Activated T-helper 1 cell treated with anti-CD3 and anti-CD28 coated beads, Interleukin-12 subunit alpha, Interleukin-12 subunit beta, Interleukin-2, Interleukin-4 antibody, amounts not matched to agents 30 ng/mL and 10 ng/mL and 1 ng/mL, durations not matched to agents 14 hours and 24 hours and 36 hours (primary cell): ENCODE measurements at regions of chr11 and their contacts with region 1.

Region 1: DNA sequence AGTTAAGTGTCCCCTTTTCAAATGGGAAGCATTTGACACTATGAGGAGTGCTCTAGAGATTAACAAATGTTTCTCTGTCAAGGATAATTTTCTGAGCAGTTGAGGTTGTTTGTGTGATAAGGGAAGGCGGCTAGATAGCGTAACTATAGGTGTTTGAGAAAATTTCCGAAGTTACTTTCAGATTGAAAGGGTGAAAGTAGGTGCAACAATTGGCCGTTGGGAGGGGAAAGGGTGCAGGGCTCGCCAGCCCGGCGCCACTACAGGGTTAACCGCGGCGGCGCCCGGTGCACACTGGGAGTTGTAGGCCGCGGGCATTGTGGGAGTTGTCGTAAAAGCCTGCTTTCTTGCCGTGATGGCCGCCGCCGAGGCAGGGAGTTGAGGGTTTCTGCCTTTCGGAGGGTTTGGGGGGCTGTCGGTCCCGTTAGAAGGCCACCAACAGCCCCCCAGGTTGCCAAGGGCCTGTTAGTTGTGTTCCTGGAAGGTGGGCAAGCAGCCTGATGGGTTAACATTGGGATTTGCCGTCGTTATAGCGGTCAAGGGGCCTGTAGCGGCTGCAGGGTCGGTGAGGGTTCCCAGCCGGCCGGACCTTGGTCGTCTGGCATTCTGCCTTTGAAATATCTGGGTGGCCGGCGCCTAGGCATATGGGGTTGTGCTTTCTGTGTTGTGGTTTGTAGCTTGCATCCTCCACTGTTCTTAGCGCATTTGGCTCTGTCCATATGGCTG is 36.5 kb upstream of the HSD17B12 start:
- DNase-seq: peak; percentile 83
- H3K4me3 Mint-ChIP-seq: peak overlapping the region; percentile 99
- H3K27ac Mint-ChIP-seq: peak overlapping the region; percentile 91
- H3K4me1 Mint-ChIP-seq: peaks cover 19% of the 10 kb centered on the region
- H3K27me3 Mint-ChIP-seq: peaks cover 18% of the 10 kb centered on the region

Region 2: DNA sequence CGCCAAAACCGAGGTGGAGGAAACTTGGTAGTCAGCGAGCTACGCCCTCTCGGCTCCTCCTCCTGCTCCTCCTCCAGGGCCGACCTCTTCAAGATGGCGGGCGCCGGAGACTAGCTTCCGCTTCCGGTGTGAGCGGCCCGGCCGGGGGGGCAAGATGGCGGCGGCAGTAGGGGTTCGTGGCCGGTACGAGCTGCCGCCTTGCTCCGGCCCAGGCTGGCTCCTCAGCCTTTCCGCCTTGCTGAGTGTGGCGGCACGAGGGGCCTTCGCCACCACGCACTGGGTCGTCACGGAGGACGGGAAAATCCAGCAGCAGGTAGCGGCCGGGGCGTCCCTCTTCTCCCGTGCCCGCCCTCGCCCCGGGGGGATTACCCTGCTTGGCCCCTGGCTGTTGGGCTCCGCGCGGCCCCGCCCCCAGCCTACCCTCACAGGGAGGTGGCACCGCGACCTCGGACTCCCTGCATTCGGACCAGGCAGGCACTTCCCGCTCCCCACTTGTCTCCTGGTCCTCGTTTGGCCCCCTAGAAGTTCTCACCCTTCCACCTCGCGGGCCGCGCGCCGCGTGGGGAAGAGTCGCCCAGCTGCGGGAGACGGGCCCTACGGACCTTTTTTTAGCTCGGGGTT is 285.1 kb before region 1 on chr11 and contains the start of gene TTC17:
- intact Hi-C with region 1: loop called (anchors 1 kb)
- DNase-seq: peak; percentile 92
- H3K4me3 Mint-ChIP-seq: peak within 1 kb of the TSS; percentile 94
- H3K27ac Mint-ChIP-seq: peak within 1 kb of the TSS; percentile 92
- H3K4me1 Mint-ChIP-seq: peaks cover 38% of the 10 kb centered on the region
- H3K27me3 Mint-ChIP-seq: peaks cover 2% of the 10 kb centered on the region
- total RNA-seq, gene TTC17: 74.4 and 74.7 TPM in 2 replicates

Region 3: GRCh38 chr11:43830928-43831440 is 186.9 kb after region 1 on chr11:
- intact Hi-C with region 1: loop called (anchors 1 kb)
- DNase-seq: peak; percentile 2
- H3K4me3 Mint-ChIP-seq: no peak overlapping the region
- H3K27ac Mint-ChIP-seq: peak overlapping the region; percentile 80
- H3K4me1 Mint-ChIP-seq: peaks cover 18% of the 10 kb centered on the region
- H3K27me3 Mint-ChIP-seq: no peaks in the 10 kb centered on the region

Region 4: GRCh38 chr11:43852057-43852636 is 208.1 kb after region 1 on chr11:
- intact Hi-C with region 1: loop called (anchors 1 kb)
- DNase-seq: peak; percentile 33
- H3K4me3 Mint-ChIP-seq: no peak overlapping the region
- H3K27ac Mint-ChIP-seq: no peak overlapping the region
- H3K4me1 Mint-ChIP-seq: no peaks in the 10 kb centered on the region
- H3K27me3 Mint-ChIP-seq: no peaks in the 10 kb centered on the region

Region 5: GRCh38 chr11:43880640-43881159 is 236.6 kb after region 1 on chr11 and contains the start of gene ALKBH3:
- intact Hi-C with region 1: loop called (anchors 1 kb)
- DNase-seq: peak; percentile 84
- H3K4me3 Mint-ChIP-seq: peak within 1 kb of the TSS; percentile 93
- H3K27ac Mint-ChIP-seq: peak within 1 kb of the TSS; percentile 62
- H3K4me1 Mint-ChIP-seq: peaks cover 20% of the 10 kb centered on the region
- H3K27me3 Mint-ChIP-seq: peaks cover 10% of the 10 kb centered on the region
- total RNA-seq, gene ALKBH3: 32.7 and 38.1 TPM in 2 replicates

Region 6: GRCh38 chr11:44036811-44037657 is 393.0 kb after region 1 on chr11:
- intact Hi-C with region 1: loop called (anchors 1 kb)
- DNase-seq: peak; percentile 11
- H3K4me3 Mint-ChIP-seq: no peak overlapping the region
- H3K27ac Mint-ChIP-seq: no peak overlapping the region
- H3K4me1 Mint-ChIP-seq: no peaks in the 10 kb centered on the region
- H3K27me3 Mint-ChIP-seq: peaks cover 7% of the 10 kb centered on the region

Region 7: DNA sequence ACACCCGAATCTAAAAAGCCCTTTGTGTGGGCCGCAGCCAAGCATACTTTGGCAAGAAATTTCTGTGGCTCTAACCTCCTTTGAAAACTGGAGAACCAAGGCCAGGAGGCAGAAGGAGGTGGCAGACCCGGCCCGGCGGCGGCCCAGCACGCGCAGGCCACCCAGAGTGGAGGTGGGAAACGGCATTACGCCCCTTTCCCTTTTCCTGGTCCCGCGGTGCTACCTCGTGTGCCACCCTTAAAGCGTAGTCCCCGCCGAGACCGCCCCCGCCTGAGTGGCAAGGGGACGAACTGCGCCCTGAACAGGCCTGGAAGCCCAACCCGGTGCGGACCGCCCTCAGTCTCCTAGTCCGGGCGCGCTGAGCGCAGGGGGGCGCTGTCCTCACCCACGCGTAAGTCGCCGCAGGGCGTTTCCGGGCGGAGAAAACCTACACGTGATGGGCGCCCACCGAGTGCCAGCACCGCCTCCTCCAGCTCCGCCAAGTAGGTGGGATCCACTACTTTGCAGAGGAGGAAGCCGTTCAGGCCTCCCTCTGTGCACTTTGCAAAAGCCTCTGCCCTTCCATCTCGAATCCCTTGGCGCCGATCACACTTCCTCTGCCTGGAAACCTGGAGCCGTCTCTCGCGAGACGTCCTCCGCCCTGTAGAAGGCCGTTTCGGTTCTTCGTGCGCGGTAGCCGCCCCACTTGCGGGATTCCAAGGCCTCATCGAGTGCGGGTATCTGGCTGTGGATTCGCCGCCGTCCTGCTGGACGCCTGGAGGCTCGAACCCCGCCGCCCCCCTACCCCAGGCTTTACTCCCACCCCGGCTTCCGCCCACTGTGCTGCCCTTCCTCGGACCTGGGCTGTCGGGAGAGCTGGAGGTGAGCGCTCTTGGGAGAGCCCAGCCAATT is 422.0 kb after region 1 on chr11 and contains the start of gene ACCS:
- intact Hi-C with region 1: loop called (anchors 10 kb)
- DNase-seq: peak; percentile 83
- H3K4me3 Mint-ChIP-seq: peak within 1 kb of the TSS; percentile 91
- H3K27ac Mint-ChIP-seq: peak within 1 kb of the TSS; percentile 94
- H3K4me1 Mint-ChIP-seq: peaks cover 29% of the 10 kb centered on the region
- H3K27me3 Mint-ChIP-seq: peaks cover 4% of the 10 kb centered on the region
- total RNA-seq, gene ACCS: 14.7 and 18.1 TPM in 2 replicates